ENCODE measurements at regions of chr20 and their contacts with region 1.

Region 1: GRCh38 chr20:1619861-1620444 is at the start of gene SIRPB1:
- H3K4me3 Mint-ChIP-seq: peak within 1 kb of the TSS; percentile 63
- H3K27ac Mint-ChIP-seq: peak within 1 kb of the TSS; percentile 89
- H3K4me1 Mint-ChIP-seq: peaks cover 84% of the 10 kb centered on the region
- H3K27me3 Mint-ChIP-seq: no peaks in the 10 kb centered on the region

Region 2: GRCh38 chr20:1576641-1577040 is 43.3 kb before region 1 on chr20:
- intact Hi-C with region 1: loop called (anchors 5 kb)
- H3K4me3 Mint-ChIP-seq: no peak overlapping the region
- H3K27ac Mint-ChIP-seq: no peak overlapping the region
- H3K4me1 Mint-ChIP-seq: peaks cover 44% of the 10 kb centered on the region
- H3K27me3 Mint-ChIP-seq: no peaks in the 10 kb centered on the region

Region 3: DNA sequence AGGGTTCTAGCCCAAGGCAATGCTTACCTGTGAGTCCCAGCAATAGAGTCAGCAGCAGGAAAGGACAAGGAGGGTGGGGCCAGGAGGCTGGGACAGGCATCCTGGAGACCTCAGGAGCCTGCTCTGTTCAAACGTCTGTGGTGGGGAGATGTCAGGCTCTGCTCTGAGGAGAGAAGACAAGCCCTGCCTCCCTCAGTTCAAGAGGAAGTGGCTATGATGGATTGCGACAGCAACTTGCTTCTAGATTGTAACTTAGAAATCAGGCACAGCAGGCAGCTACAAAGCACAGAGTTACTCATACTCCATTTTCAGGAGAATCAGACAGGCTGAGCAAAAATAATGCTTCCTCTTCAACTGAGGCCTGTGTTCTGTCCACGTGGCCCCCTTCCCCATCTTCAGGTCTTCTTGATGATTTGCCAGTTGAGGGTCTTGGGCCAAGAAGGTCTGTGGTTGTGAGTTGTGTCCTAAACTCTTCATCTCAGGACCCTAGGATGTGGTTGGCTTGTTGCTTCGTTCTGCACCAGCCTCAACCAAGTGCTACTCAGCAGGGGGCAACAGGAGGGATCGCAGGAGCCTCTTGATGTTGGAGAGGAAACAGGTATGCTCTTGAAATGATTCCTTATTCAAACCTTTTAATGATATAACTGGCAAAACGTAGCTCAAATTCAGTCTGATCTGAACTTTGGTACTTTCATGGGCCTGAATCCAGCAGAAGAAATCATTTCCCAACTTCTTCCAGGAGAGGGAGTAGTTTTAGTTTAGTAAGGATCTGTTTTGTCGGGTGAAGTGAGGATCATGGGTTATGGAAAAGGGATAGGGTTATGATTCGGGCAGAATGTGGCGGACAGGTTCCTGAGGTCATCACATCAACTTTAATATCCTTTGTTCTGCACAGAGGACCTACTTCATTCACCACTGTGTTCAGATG is 31.2 kb before region 1 on chr20:
- intact Hi-C with region 1: no loop called
- H3K4me3 Mint-ChIP-seq: peak overlapping the region; percentile 67
- H3K27ac Mint-ChIP-seq: peak overlapping the region; percentile 96
- H3K4me1 Mint-ChIP-seq: peaks cover 45% of the 10 kb centered on the region
- H3K27me3 Mint-ChIP-seq: no peaks in the 10 kb centered on the region

Measured in dendritic cell treated with granulocyte-macrophage colony-stimulating factor and Interleukin-4, amounts not matched to agents 40 ng/mL and 50 ng/mL, for 4 days (primary cell).